PC-9 (cell line): ENCODE measurements at regions of chr1 and their contacts with region 1.

Region 1: DNA sequence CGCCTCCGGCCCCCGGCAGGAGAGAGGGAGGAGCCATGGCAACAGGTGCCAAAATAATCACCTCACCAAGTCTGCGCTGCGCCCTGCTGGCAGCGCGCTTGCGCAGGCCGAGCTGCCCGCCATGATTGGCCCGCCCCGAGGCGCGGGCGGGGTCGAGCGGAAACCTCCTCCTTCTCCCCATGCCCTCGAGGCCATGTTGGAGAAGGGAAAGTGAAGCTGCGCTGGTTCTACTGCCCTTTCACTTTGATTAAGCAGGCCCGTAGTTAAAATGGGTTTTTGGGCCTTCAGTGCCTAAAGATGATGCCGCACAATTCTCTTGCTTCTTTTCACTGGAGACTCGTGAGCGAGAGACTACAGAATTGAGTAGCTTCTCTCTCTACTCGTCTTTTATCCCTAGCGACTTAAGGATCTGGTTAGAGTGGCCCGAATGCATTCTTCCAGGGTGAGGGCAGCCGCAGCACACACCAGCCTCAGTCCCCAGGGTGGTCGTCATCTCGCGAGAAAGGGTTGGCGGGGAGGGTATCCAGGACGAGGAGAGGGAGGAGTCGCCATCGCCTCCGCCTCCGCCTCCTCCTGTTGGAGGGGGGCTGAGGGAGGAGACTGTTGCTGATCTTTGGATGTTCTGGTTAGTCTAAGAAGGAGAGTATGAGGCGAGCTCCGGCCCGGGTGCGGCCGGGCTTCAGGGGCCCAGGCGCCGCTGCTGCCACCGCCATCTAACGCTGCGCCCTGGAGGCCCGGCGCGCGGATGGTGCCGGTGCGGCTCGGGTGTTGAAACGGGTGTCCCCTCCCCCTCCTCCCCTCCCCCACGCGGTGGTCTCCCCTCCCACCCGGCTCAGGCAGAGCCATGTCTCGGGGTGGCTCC is at the start of gene DCAF6:
- DNase-seq: peak; percentile 93 to 97
- H3K4me3 ChIP-seq: peak within 1 kb of the TSS; percentile 82
- H3K27ac ChIP-seq: peak within 1 kb of the TSS; percentile 94
- H3K4me1 ChIP-seq: peaks cover 36% of the 10 kb centered on the region
- H3K27me3 ChIP-seq: no peaks in the 10 kb centered on the region
- CTCF ChIP-seq: no peak
- total RNA-seq, gene DCAF6: 51.8 and 77.4 TPM in 2 replicates

Region 2: GRCh38 chr1:167715157-167715999 is 220.9 kb before region 1 on chr1:
- CTCF ChIA-PET with region 1: no interaction called
- POLR2A ChIA-PET with region 1: interaction called, 10 read pairs
- intact Hi-C with region 1: loop called (anchors 2 kb)
- DNase-seq: peak; percentile 81 to 85
- H3K4me3 ChIP-seq: peak overlapping the region; percentile 97
- H3K27ac ChIP-seq: peak overlapping the region; percentile 83
- H3K4me1 ChIP-seq: peaks cover 7% of the 10 kb centered on the region; the same call in 1 of the 2 replicates
- H3K27me3 ChIP-seq: no peaks in the 10 kb centered on the region
- CTCF ChIP-seq: peak; percentile 72

Region 3: DNA sequence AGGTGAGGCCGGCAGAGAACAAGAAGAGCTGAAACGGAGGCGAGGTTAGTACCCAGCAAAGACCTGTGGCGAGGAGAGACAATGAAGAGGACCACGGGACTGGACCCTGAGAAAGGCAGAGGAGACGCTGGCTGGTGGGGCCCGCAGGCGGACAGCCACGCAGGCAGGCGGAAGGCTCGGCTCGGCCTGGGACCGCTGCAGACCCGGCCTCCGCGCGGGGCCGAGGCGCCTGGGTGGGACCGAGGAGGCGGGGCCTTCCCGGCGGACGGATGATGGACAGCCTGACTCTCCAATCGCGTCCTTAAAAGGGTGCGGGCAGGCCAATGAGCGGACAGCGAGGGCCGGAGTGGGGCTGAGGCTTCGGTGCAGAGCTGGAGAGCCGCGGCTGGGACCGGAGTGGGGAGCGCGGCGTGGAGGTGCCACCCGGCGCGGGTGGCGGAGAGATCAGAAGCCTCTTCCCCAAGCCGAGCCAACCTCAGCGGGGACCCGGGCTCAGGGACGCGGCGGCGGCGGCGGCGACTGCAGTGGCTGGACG is 214.6 kb before region 1 on chr1 and contains the start of gene MPZL1:
- CTCF ChIA-PET with region 1: no interaction called
- POLR2A ChIA-PET with region 1: interaction called, 6 read pairs
- intact Hi-C with region 1: loop called (anchors 1 kb)
- DNase-seq: peak; percentile 77 to 94
- H3K4me3 ChIP-seq: peak within 1 kb of the TSS; percentile 74
- H3K27ac ChIP-seq: peak within 1 kb of the TSS; percentile 46
- H3K4me1 ChIP-seq: peaks cover 32% of the 10 kb centered on the region
- H3K27me3 ChIP-seq: no peaks in the 10 kb centered on the region
- CTCF ChIP-seq: no peak
- total RNA-seq, gene MPZL1: 67.8 and 80.3 TPM in 2 replicates

Region 4: DNA sequence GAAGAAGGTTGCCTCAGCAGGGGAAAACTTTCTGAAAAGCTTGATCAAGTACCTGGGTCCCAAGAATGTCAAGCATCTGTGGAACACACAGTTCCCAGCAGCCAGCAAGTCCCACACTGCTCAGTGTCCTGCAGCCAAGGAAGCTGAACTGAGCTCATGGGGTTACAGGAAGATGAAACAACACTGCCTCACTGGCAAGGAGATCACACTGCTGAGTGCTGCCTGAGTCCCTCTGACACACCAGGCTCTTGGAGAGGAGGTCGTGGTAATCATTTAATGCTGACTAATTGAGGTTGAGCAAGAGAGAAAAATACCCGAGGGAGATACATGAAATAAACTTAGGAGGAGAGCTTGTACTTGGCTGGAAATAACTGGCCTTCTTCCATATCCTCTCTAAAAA is 139.3 kb before region 1 on chr1:
- CTCF ChIA-PET with region 1: no interaction called
- POLR2A ChIA-PET with region 1: interaction called, 4 read pairs
- intact Hi-C with region 1: loop called (anchors 2 kb)
- DNase-seq: peak; percentile 60 to 96
- H3K4me3 ChIP-seq: peak overlapping the region; percentile 18; the same call in 1 of the 2 replicates
- H3K27ac ChIP-seq: peak overlapping the region; percentile 93
- H3K4me1 ChIP-seq: peaks cover 53% of the 10 kb centered on the region
- H3K27me3 ChIP-seq: no peaks in the 10 kb centered on the region
- CTCF ChIP-seq: no peak

Region 5: GRCh38 chr1:167819849-167820683 is 116.2 kb before region 1 on chr1:
- CTCF ChIA-PET with region 1: no interaction called
- POLR2A ChIA-PET with region 1: interaction called, 6 read pairs
- intact Hi-C with region 1: loop called (anchors 1 kb)
- DNase-seq: peak; percentile 60 to 89
- H3K4me3 ChIP-seq: peak overlapping the region; percentile 51
- H3K27ac ChIP-seq: peak overlapping the region; percentile 66
- H3K4me1 ChIP-seq: peaks cover 27% of the 10 kb centered on the region
- H3K27me3 ChIP-seq: no peaks in the 10 kb centered on the region
- CTCF ChIP-seq: no peak